A549 (cell line): ENCODE measurements at regions of chr11 and their contacts with region 1.

Region 1: GRCh38 chr11:11966826-11967668 is 41.4 kb downstream of the DKK3 start:
- DNase-seq: peak; percentile 64 to 90
- ATAC-seq: peak; percentile 88 to 96
- H3K4me3 ChIP-seq: no peak overlapping the region
- H3K27ac ChIP-seq: no peak overlapping the region
- H3K4me1 ChIP-seq: no peaks in the 10 kb centered on the region
- CTCF ChIP-seq: peak; percentile 56
- EP300 ChIP-seq: no peak
- POLR2A ChIP-seq: no peak
- RAD21 ChIP-seq: peak; percentile 48 to 64; a peak in 4 of 5 replicates

Region 2: GRCh38 chr11:11946180-11946579 is 20.9 kb before region 1 on chr11:
- CTCF ChIA-PET with region 1: interaction called, 22 read pairs
- POLR2A ChIA-PET with region 1: no interaction called
- DNase-seq: no peak
- ATAC-seq: no peak; a peak in 1 of 6 replicates
- H3K4me3 ChIP-seq: no peak overlapping the region
- H3K27ac ChIP-seq: no peak overlapping the region
- H3K4me1 ChIP-seq: peaks cover 40% of the 10 kb centered on the region
- CTCF ChIP-seq: no peak
- EP300 ChIP-seq: no peak
- POLR2A ChIP-seq: no peak
- RAD21 ChIP-seq: no peak

Region 3: DNA sequence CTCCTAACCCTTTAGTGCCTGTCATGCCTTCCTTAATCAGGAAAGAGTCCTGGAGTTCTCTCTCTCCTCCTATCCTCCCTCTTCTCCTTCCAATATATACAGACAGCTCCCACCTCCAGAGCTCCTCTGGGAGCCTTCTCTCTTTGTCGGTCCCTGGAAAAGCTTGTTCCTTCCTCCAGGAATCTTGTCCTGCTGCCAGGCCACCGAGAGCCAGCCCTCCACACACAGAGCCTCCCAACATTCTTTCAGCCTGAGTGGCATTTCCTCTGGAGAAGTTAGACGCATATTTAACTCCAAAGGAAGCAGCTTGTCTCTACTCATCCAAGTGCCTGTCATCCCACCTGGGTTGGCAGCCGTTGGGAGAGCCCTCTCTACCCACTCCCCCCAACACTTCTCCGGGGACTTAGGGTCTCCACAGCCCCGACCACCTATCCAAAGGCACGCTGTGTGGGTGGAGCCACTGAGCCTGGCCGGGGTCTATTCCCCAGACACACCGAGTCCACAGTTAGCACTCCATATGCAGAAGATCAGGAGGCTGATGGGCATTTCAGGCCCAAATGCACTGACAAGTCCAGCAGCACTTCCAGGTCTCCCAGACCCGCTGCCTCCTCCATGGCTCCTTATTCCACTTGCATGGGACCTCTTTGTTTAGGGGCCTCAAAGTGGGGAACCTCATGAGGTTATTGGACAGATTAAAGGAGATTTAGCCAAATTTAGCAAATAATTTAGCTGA is 10.3 kb after region 1 on chr11:
- CTCF ChIA-PET with region 1: interaction called, 98 read pairs
- POLR2A ChIA-PET with region 1: interaction called, 6 read pairs
- DNase-seq: peak; percentile 71 to 75
- ATAC-seq: peak; percentile 83 to 91
- H3K4me3 ChIP-seq: peak overlapping the region; percentile 14; the same call in 2 of the 3 replicates
- H3K27ac ChIP-seq: peak overlapping the region; percentile 90 to 93
- H3K4me1 ChIP-seq: peaks cover 52% of the 10 kb centered on the region
- CTCF ChIP-seq: no peak
- EP300 ChIP-seq: no peak
- POLR2A ChIP-seq: no peak
- RAD21 ChIP-seq: no peak

Region 4: DNA sequence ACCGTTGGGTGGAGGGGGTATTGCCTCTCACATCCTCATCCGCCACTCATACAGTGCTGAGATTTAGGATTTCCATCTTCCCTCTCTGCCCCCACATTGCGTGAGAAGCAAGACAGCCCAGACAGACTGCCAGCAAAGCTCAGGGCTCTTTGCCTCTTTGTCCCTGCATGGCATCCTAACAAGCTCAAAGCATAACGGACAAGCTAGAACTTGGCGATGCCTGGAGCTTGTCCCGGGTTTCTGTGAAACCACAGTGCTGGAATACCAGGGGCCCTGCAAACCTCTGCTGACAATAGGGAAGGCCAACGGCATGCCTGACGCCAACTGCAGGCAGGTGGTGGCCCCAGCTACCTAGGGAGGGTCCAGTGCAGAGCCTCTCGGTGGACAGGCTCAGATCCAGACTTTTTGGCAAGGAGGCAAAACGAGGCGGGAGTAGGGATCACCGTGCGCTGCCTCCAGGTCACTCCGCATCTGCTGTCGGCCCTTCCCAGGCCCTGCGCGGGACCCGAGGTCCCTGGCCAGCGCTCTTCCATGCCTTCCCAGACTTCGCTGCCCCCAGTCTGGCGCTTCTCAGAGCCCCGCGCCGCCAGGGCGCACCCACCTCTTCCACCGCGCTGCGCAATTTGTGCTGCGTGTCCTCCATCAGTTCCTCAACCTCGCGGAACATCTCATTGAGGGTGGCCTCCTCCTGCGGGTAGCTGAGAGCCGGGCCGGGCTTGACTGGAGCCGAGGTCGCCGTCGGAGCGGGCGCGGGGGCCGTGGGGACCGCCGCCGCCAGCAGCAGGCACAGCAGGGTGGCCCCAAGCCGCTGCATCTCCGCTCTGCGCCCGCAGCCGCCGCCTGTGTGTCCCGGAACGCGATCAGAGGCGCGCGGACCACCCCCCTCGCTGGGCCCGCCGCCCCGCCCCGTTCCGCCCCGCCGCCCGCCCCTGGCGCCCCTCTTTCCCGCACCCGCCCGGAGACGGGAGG is 41.0 kb after region 1 on chr11 and contains the start of gene DKK3:
- CTCF ChIA-PET with region 1: interaction called, 17 read pairs
- POLR2A ChIA-PET with region 1: no interaction called
- DNase-seq: no peak
- ATAC-seq: no peak
- H3K4me3 ChIP-seq: peak within 1 kb of the TSS; percentile 77
- H3K27ac ChIP-seq: peak within 1 kb of the TSS; percentile 76 to 89
- H3K4me1 ChIP-seq: peaks cover 18% of the 10 kb centered on the region
- CTCF ChIP-seq: no peak
- EP300 ChIP-seq: no peak
- POLR2A ChIP-seq: no peak
- RAD21 ChIP-seq: no peak
- polyA plus RNA-seq, gene DKK3: 18.4 and 22.8 TPM in 2 replicates